Naive thymus-derived CD4-positive, alpha-beta T cell (primary cell): ENCODE measurements at regions of chr7 and their contacts with region 1.

Region 1: GRCh38 chr7:50335795-50336754 is 31.6 kb downstream of the IKZF1 start:
- DNase-seq: peak in 6 of 9 donors; percentile 54 to 86 (median 60)
- ATAC-seq: peak; percentile 62
- H3K4me3 ChIP-seq: peak overlapping the region; percentile 29
- H3K4me3 Mint-ChIP-seq: peak overlapping the region in 1 of 10 donors; percentile 90
- H3K27ac ChIP-seq: peak overlapping the region; percentile 93
- H3K27ac Mint-ChIP-seq: no peak overlapping the region
- H3K4me1 ChIP-seq: peaks cover 99% of the 10 kb centered on the region in 2 donors
- H3K4me1 Mint-ChIP-seq: peaks cover 0 to 68% (median 17%) of the 10 kb centered on the region in 7 donors
- H3K27me3 ChIP-seq: no peaks in the 10 kb centered on the region
- H3K27me3 Mint-ChIP-seq: no peaks in the 10 kb centered on the region

Region 2: GRCh38 chr7:49037348-49038210 is 1298.5 kb before region 1 on chr7:
- CTCF ChIA-PET with region 1: no interaction called
- POLR2A ChIA-PET with region 1: no interaction called
- intact Hi-C with region 1: no loop called
- DNase-seq: no peak
- ATAC-seq: no peak
- H3K4me3 ChIP-seq: no peak overlapping the region
- H3K4me3 Mint-ChIP-seq: no peak overlapping the region
- H3K27ac ChIP-seq: no peak overlapping the region
- H3K27ac Mint-ChIP-seq: no peak overlapping the region
- H3K4me1 ChIP-seq: no peaks in the 10 kb centered on the region
- H3K4me1 Mint-ChIP-seq: no peaks in the 10 kb centered on the region
- H3K27me3 ChIP-seq: no peaks in the 10 kb centered on the region
- H3K27me3 Mint-ChIP-seq: no peaks in the 10 kb centered on the region

Region 3: DNA sequence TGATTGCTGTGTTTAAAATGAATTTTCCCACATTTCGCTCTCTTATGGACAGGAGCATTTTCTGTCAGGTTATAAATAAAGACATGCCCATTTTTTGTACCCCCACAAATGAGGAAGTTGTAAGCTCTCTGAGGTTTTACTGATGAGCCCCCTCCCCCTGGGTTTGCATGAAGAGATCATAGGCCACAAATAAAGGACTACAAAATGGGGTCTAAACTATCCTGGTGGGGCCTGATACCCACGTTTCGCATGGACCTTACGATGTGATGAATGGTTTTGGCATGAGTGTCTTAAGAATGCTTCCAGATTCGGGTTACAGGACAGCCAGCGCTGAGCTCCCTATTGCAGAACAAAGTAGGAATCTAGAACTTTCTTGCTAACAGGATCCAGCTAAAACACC is 25.7 kb before region 1 on chr7:
- CTCF ChIA-PET with region 1: interaction called, 8 read pairs
- POLR2A ChIA-PET with region 1: interaction called, 2,368 read pairs
- intact Hi-C with region 1: loop called (anchors 1 kb)
- DNase-seq: no peak
- ATAC-seq: no peak
- H3K4me3 ChIP-seq: peak overlapping the region; percentile 84
- H3K4me3 Mint-ChIP-seq: peak overlapping the region; percentile 91 to 100 (median 99)
- H3K27ac ChIP-seq: peak overlapping the region; percentile 90
- H3K27ac Mint-ChIP-seq: peak overlapping the region in 6 of 9 donors; percentile 97 to 100 (median 99)
- H3K4me1 ChIP-seq: peaks cover 36 to 65% of the 10 kb centered on the region in 2 donors
- H3K4me1 Mint-ChIP-seq: peaks cover 16 to 74% (median 59%) of the 10 kb centered on the region in 7 donors
- H3K27me3 ChIP-seq: no peaks in the 10 kb centered on the region
- H3K27me3 Mint-ChIP-seq: no peaks in the 10 kb centered on the region

Region 4: DNA sequence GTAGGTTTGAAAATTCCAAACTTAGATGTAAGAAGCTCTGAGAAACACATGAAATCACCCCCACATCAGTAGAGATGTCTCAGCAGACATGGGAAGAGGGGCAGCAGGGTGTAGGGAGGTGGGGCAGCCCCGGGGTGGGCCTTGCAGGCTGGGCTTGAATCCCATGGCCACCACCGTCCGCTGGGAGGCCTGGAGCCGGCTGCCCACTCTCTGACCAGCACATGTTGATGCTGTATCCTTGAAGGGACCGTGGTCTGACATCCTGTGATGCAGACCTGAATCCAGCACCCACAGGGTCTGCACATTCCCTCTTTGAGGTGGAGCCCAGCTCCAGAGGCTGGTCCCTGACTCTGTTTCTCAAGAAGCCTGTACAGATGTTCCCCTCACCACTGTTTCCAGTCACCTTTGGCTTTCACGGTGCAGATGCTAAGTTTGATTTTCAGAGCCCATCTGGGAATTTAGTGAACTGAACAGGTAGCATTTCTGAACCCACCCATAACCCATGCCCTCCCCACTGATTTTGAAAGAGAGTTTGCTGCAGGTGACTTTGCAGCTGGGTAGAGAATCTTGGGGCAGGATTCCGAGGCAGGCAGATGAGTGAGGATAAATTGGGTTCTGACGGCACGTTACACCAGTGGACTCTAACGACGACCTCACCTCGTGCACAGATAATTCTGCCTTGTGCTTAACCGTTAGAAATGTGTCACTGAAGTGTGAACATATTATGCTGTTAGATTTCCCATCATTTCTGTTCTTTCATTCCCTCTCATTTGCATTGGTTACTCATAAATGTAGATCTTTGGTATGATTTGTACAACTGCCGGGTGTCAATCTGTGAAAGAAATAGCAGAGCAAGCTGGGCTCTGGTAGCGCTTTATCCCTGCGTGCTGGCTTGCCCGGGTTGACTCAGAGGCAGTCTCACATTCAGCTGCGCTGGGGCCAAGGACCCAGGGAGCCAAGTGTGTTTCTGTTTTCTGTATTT is 14.2 kb after region 1 on chr7:
- CTCF ChIA-PET with region 1: interaction called, 7 read pairs
- POLR2A ChIA-PET with region 1: interaction called, 2,368 read pairs
- intact Hi-C with region 1: loop called (anchors 1 kb)
- DNase-seq: peak in 5 of 9 donors; percentile 55 to 77 (median 68)
- ATAC-seq: peak; percentile 51
- H3K4me3 ChIP-seq: peak overlapping the region; percentile 4
- H3K4me3 Mint-ChIP-seq: peak overlapping the region; percentile 71 to 95 (median 78)
- H3K27ac ChIP-seq: peak overlapping the region; percentile 93
- H3K27ac Mint-ChIP-seq: peak overlapping the region in 6 of 9 donors; percentile 91 to 100 (median 100)
- H3K4me1 ChIP-seq: peaks cover 96% of the 10 kb centered on the region in 2 donors
- H3K4me1 Mint-ChIP-seq: peaks cover 0 to 100% (median 97%) of the 10 kb centered on the region in 7 donors
- H3K27me3 ChIP-seq: no peaks in the 10 kb centered on the region
- H3K27me3 Mint-ChIP-seq: no peaks in the 10 kb centered on the region

Region 5: DNA sequence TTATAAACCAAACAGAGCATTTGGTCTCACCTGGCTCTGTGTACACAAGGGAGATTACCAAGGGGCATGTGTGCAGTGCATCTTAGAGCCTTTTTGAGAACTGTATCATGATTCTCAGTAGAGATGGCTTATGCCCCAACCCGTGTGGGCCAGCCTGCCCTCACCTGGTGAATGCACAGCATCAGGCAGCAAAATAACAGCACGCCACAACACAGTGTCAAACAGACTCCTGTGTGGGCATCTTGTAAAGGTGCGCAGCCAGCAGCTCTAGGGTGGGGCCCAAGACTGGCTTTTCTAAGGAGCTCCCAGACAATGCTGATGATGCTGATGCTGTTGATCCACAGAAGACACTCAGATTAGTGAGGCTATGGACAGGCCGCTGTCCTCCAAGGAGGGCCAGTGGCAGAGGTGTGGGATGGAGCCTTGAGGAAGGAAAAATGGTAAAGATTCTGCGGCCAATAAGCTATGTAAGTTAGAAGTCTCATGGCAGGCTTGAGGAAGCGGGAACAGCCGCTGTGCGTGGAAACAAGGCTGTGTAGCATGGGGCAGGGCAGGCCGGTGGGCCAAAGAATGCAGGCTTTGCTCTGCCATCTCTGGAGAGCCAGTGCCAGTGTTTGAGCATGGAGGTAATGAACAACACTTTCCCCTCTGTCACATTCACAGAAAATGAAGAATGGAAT is 130.6 kb after region 1 on chr7:
- CTCF ChIA-PET with region 1: no interaction called
- POLR2A ChIA-PET with region 1: no interaction called
- intact Hi-C with region 1: no loop called
- DNase-seq: no peak
- ATAC-seq: no peak
- H3K4me3 ChIP-seq: no peak overlapping the region
- H3K4me3 Mint-ChIP-seq: peak overlapping the region in 1 of 10 donors; percentile 9
- H3K27ac ChIP-seq: no peak overlapping the region
- H3K27ac Mint-ChIP-seq: peak overlapping the region in 2 of 9 donors; percentile 2 to 81
- H3K4me1 ChIP-seq: no peaks in the 10 kb centered on the region
- H3K4me1 Mint-ChIP-seq: peaks cover 8 to 14% (median 11%) of the 10 kb centered on the region in 7 donors
- H3K27me3 ChIP-seq: no peaks in the 10 kb centered on the region
- H3K27me3 Mint-ChIP-seq: peaks cover 0 to 18% (median 0%) of the 10 kb centered on the region in 5 donors